ENCODE measurements at regions of chr5 and their contacts with region 1.

Region 1: GRCh38 chr5:141245250-141245717 is at the start of gene PCDHB15:
- DNase-seq: no peak
- ATAC-seq: peak in 1 of 4 donors; percentile 42
- H3K4me3 ChIP-seq: peak within 1 kb of the TSS; percentile 52
- H3K27ac ChIP-seq: no peak within 1 kb of the TSS
- H3K4me1 ChIP-seq: no peaks in the 10 kb centered on the region
- H3K27me3 ChIP-seq: peaks cover 0 to 32% (median 15%) of the 10 kb centered on the region in 3 donors
- CTCF ChIP-seq: no peak
- total RNA-seq, gene PCDHB15: 0.50 to 2.5 (median 0.91) TPM

Region 2: GRCh38 chr5:141260458-141261237 is 15.4 kb after region 1 on chr5:
- intact Hi-C with region 1: loop called in 1 of 2 experiments (anchors 1 kb)
- DNase-seq: no peak
- ATAC-seq: no peak
- H3K4me3 ChIP-seq: no peak overlapping the region
- H3K27ac ChIP-seq: no peak overlapping the region
- H3K4me1 ChIP-seq: no peaks in the 10 kb centered on the region
- H3K27me3 ChIP-seq: no peaks in the 10 kb centered on the region
- CTCF ChIP-seq: no peak

Region 3: DNA sequence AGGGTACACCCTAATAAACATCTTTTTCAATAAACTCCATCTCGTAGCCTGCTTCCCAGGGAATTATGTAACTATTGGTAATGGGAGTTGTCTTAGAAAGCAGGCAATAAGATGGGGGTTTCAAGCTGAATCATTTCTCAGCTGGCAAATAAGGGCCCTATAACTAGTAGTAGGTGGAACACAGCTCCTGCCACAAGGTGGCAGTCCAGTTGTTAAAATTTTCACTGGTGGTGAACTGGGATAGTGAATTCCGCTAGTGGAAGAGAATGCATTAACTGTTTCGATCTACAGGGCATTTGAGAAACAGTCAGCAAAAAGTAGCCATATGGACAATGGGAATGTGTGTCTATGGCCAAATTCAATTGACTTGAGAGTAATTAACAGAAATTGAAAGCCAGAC is 27.6 kb after region 1 on chr5:
- intact Hi-C with region 1: no loop called
- DNase-seq: no peak
- ATAC-seq: no peak
- H3K4me3 ChIP-seq: no peak overlapping the region
- H3K27ac ChIP-seq: no peak overlapping the region
- H3K4me1 ChIP-seq: no peaks in the 10 kb centered on the region
- H3K27me3 ChIP-seq: no peaks in the 10 kb centered on the region
- CTCF ChIP-seq: no peak

Measured in psoas muscle (tissue), 8 donors.